ENCODE measurements at regions of chr14 and their contacts with region 1.

Region 1: GRCh38 chr14:74762917-74763802 is at the start of gene YLPM1:
- DNase-seq: peak; percentile 91 to 94
- ATAC-seq: peak; percentile 99
- H3K4me3 ChIP-seq: peak within 1 kb of the TSS; percentile 69 to 100 (median 92)
- H3K27ac ChIP-seq: peak within 1 kb of the TSS; percentile 73 to 98 (median 94)
- H3K4me1 ChIP-seq: peaks cover 0 to 50% (median 42%) of the 10 kb centered on the region in 9 donors
- H3K27me3 ChIP-seq: no peaks in the 10 kb centered on the region
- CTCF ChIP-seq: peak; percentile 28 to 79 (median 53)
- total RNA-seq, gene YLPM1: 25.2 to 45.9 (median 37.9) TPM

Region 2: GRCh38 chr14:74302634-74303577 is 460.3 kb before region 1 on chr14 and contains the start of gene ABCD4:
- intact Hi-C with region 1: loop called in 1 of 10 experiments (anchors 5 kb)
- DNase-seq: peak; percentile 93 to 97
- ATAC-seq: peak; percentile 97 to 99 (median 99)
- H3K4me3 ChIP-seq: peak within 1 kb of the TSS; percentile 62 to 99 (median 83)
- H3K27ac ChIP-seq: peak within 1 kb of the TSS; percentile 15 to 95 (median 91)
- H3K4me1 ChIP-seq: peaks cover 0 to 49% (median 37%) of the 10 kb centered on the region in 9 donors
- H3K27me3 ChIP-seq: no peaks in the 10 kb centered on the region
- CTCF ChIP-seq: peak in 8 of 9 donors; percentile 14 to 83 (median 58)
- total RNA-seq, gene ABCD4: 18.1 to 26.3 (median 22.0) TPM

Region 3: GRCh38 chr14:74712499-74713394 is 50.4 kb before region 1 on chr14 and contains the starts of genes AREL1 and FCF1:
- intact Hi-C with region 1: loop called in 2 of 10 experiments (anchors 2 to 5 kb)
- DNase-seq: peak; percentile 68 to 90
- ATAC-seq: peak; percentile 97 to 100 (median 99)
- H3K4me3 ChIP-seq: peak within 1 kb of the TSS; percentile 65 to 93 (median 82)
- H3K27ac ChIP-seq: peak within 1 kb of the TSS in 9 of 10 donors; percentile 70 to 90 (median 86)
- H3K4me1 ChIP-seq: peaks cover 0 to 53% (median 37%) of the 10 kb centered on the region in 9 donors
- H3K27me3 ChIP-seq: no peaks in the 10 kb centered on the region
- CTCF ChIP-seq: no peak
- total RNA-seq, gene AREL1: 18.1 to 27.2 (median 20.9) TPM
- total RNA-seq, gene FCF1: 31.7 to 45.5 (median 37.2) TPM

Measured in heart right ventricle (tissue), 16 donors.